ENCODE measurements at regions of chr13 and their contacts with region 1.

Region 1: DNA sequence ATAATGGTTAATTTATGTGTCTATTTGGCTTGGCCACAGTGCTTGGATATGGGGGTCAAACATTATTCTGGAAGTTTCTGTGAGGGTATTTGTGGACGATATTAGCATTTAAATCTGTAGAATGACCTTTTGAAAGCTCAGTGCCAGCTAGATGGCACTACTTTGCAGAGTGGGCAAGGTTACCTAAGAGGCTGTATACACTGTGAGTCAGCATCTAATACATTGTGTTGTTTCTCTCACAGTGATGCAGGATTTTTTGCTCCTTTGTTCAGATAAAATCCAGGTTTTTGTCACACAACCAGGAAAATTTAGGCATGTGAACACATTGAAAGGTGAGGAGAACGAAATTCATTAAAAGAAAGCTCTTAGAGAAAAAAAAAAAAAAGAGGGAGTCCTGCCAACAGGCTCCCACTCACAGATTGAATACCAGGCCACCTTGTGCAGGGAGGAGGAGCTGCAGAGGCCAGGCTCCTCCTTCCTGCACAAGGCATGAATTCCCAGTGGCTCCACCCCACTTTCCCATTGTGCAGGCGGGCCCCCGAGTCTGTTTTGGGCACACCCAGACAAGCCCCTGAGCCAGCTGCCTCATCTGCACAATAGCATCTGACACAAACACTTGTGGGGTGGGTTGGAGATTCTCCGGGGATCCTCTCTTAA is 551.0 kb upstream of the ATXN8OS start:
- DNase-seq: no peak
- ATAC-seq: no peak
- H3K4me3 ChIP-seq: no peak overlapping the region
- H3K27ac ChIP-seq: no peak overlapping the region
- H3K4me1 ChIP-seq: no peaks in the 10 kb centered on the region
- H3K27me3 ChIP-seq: no peaks in the 10 kb centered on the region
- CTCF ChIP-seq: no peak

Region 2: DNA sequence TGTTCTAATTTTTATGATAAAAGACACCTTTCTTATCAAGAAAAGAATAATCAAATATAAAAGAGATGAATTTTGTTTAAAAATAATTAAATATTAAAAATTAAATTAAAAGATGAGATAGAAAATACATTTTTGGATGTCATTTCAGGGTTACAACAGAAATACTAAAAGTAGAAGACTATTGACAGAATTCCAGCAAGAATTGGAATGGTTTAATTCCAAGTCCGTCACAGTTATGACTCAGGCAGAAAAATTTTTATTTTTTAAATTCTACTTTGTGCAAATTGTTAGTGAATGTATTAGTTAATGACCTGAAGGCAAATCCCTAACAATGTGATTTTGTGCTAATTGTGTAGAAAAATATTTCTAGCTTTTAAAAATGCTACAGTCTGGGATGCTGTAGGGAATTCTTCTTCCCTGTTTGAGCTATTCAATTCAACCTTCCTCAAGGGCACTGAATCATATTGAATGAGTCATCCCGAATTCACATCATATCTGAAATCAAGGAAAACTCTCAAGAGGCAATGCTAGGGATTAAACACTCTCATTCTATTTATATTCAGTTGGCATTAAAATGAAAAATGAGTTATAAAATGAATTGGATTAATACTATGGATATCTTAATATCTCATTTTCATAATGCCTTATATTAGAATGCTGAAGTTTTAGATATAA is 82.5 kb before region 1 on chr13:
- CTCF ChIA-PET with region 1: no interaction called
- POLR2A ChIA-PET with region 1: interaction called, 11 read pairs
- in situ Hi-C with region 1: no loop called
- intact Hi-C with region 1: no loop called
- DNase-seq: no peak
- ATAC-seq: no peak
- H3K4me3 ChIP-seq: no peak overlapping the region
- H3K27ac ChIP-seq: no peak overlapping the region
- H3K4me1 ChIP-seq: no peaks in the 10 kb centered on the region
- H3K27me3 ChIP-seq: no peaks in the 10 kb centered on the region
- CTCF ChIP-seq: no peak

Measured in Panc1 (cell line).